ENCODE measurements at regions of chr14 and their contacts with region 1.

Region 1: GRCh38 chr14:77320238-77320935 is at the start of gene POMT2:
- DNase-seq: peak; percentile 94
- H3K4me3 ChIP-seq: peak within 1 kb of the TSS; percentile 66 to 93 (median 76)
- H3K27ac ChIP-seq: peak within 1 kb of the TSS; percentile 94
- H3K4me1 ChIP-seq: peaks cover 17% of the 10 kb centered on the region
- H3K27me3 ChIP-seq: no peaks in the 10 kb centered on the region
- CTCF ChIP-seq: peak; percentile 33 to 44
- POLR2A ChIP-seq: no peak
- total RNA-seq, gene POMT2: 43.2 and 48.2 TPM in 2 replicates

Region 2: GRCh38 chr14:77033622-77034521 is 286.5 kb before region 1 on chr14:
- CTCF ChIA-PET with region 1: no interaction called
- POLR2A ChIA-PET with region 1: interaction called, 3 read pairs
- dilution Hi-C with region 1: no loop called
- intact Hi-C with region 1: loop called (anchors 1 kb)
- DNase-seq: peak; percentile 93
- H3K4me3 ChIP-seq: peak overlapping the region; percentile 20 to 48 (median 26)
- H3K27ac ChIP-seq: peak overlapping the region; percentile 99
- H3K4me1 ChIP-seq: peaks cover 59% of the 10 kb centered on the region
- H3K27me3 ChIP-seq: no peaks in the 10 kb centered on the region
- CTCF ChIP-seq: no peak
- POLR2A ChIP-seq: peak; percentile 73

Region 3: GRCh38 chr14:77139540-77140358 is 180.6 kb before region 1 on chr14:
- CTCF ChIA-PET with region 1: interaction called, 9 read pairs
- POLR2A ChIA-PET with region 1: no interaction called
- dilution Hi-C with region 1: no loop called
- intact Hi-C with region 1: loop called (anchors 1 kb)
- DNase-seq: no peak
- H3K4me3 ChIP-seq: peak overlapping the region in 1 of 3 experiments; percentile 9
- H3K27ac ChIP-seq: no peak overlapping the region
- H3K4me1 ChIP-seq: peaks cover 13% of the 10 kb centered on the region
- H3K27me3 ChIP-seq: peaks cover 47 to 49% of the 10 kb centered on the region in 2 experiments
- CTCF ChIP-seq: peak; percentile 67 to 89
- POLR2A ChIP-seq: no peak

Region 4: GRCh38 chr14:77376771-77377501 is 56.5 kb after region 1 on chr14 and contains the starts of genes SAMD15 and TMED8:
- CTCF ChIA-PET with region 1: interaction called, 15 read pairs
- POLR2A ChIA-PET with region 1: interaction called, 8 read pairs
- dilution Hi-C with region 1: no loop called
- intact Hi-C with region 1: loop called (anchors 1 kb)
- DNase-seq: peak; percentile 95
- H3K4me3 ChIP-seq: peak within 1 kb of the TSS; percentile 58 to 76 (median 69)
- H3K27ac ChIP-seq: peak within 1 kb of the TSS; percentile 71
- H3K4me1 ChIP-seq: peaks cover 15% of the 10 kb centered on the region
- H3K27me3 ChIP-seq: no peaks in the 10 kb centered on the region
- CTCF ChIP-seq: peak in 1 of 2 donors; percentile 30
- POLR2A ChIP-seq: peak; percentile 58
- total RNA-seq, gene SAMD15: 0.65 and 1.1 TPM in 2 replicates
- total RNA-seq, gene TMED8: 12.6 and 13.5 TPM in 2 replicates

Region 5: GRCh38 chr14:77554207-77554606 is 233.8 kb after region 1 on chr14:
- CTCF ChIA-PET with region 1: interaction called, 4 read pairs
- POLR2A ChIA-PET with region 1: no interaction called
- dilution Hi-C with region 1: no loop called
- intact Hi-C with region 1: loop called (anchors 2 kb)
- DNase-seq: no peak
- H3K4me3 ChIP-seq: no peak overlapping the region
- H3K27ac ChIP-seq: no peak overlapping the region
- H3K4me1 ChIP-seq: no peaks in the 10 kb centered on the region
- H3K27me3 ChIP-seq: no peaks in the 10 kb centered on the region
- CTCF ChIP-seq: no peak
- POLR2A ChIP-seq: no peak

Region 6: GRCh38 chr14:77707724-77708408 is 387.5 kb after region 1 on chr14 and contains the starts of genes ALKBH1 and SLIRP:
- CTCF ChIA-PET with region 1: no interaction called
- POLR2A ChIA-PET with region 1: no interaction called
- dilution Hi-C with region 1: no loop called
- intact Hi-C with region 1: loop called (anchors 1 kb)
- DNase-seq: peak; percentile 85
- H3K4me3 ChIP-seq: peak within 1 kb of the TSS; percentile 44 to 98 (median 98)
- H3K27ac ChIP-seq: peak within 1 kb of the TSS; percentile 19
- H3K4me1 ChIP-seq: peaks cover 21% of the 10 kb centered on the region
- H3K27me3 ChIP-seq: no peaks in the 10 kb centered on the region
- CTCF ChIP-seq: no peak
- POLR2A ChIP-seq: peak; percentile 94
- total RNA-seq, gene ALKBH1: 13.1 and 14.8 TPM in 2 replicates
- total RNA-seq, gene SLIRP: 160 and 177 TPM in 2 replicates